K562 (cell line): ENCODE measurements at regions of chr16 and their contacts with region 1.

Region 1: GRCh38 chr16:24062270-24062817 is 193.8 kb upstream of the CACNG3 start:
- DNase-seq: no peak
- ATAC-seq: no peak
- H3K4me3 ChIP-seq: no peak overlapping the region
- H3K27ac ChIP-seq: no peak overlapping the region; the same call in 2 of the 3 replicates
- H3K4me1 ChIP-seq: no peaks in the 10 kb centered on the region; a peak in 3 of 5 replicates
- H3K27me3 ChIP-seq: no peaks in the 10 kb centered on the region
- CTCF ChIP-seq: no peak
- EP300 ChIP-seq: no peak
- POLR2A ChIP-seq: no peak
- RAD21 ChIP-seq: no peak

Region 2: GRCh38 chr16:23842137-23842600 is 220.2 kb before region 1 on chr16:
- CTCF ChIA-PET with region 1: no interaction called
- POLR2A ChIA-PET with region 1: no interaction called
- in situ Hi-C with region 1: no loop called
- intact Hi-C with region 1: no loop called
- DNase-seq: no peak
- ATAC-seq: no peak
- H3K4me3 ChIP-seq: no peak overlapping the region
- H3K27ac ChIP-seq: peak overlapping the region; percentile 21; the same call in 1 of the 3 replicates
- H3K4me1 ChIP-seq: peaks cover 7 to 39% of the 10 kb centered on the region in 2 experiments; a peak in 3 of 5 replicates
- H3K27me3 ChIP-seq: no peaks in the 10 kb centered on the region
- CTCF ChIP-seq: no peak
- EP300 ChIP-seq: no peak
- POLR2A ChIP-seq: no peak
- RAD21 ChIP-seq: no peak

Region 3: GRCh38 chr16:23987443-23987842 is 74.9 kb before region 1 on chr16:
- CTCF ChIA-PET with region 1: no interaction called
- POLR2A ChIA-PET with region 1: no interaction called
- in situ Hi-C with region 1: no loop called
- intact Hi-C with region 1: no loop called
- DNase-seq: no peak
- ATAC-seq: no peak
- H3K4me3 ChIP-seq: no peak overlapping the region
- H3K27ac ChIP-seq: no peak overlapping the region
- H3K4me1 ChIP-seq: no peaks in the 10 kb centered on the region
- H3K27me3 ChIP-seq: no peaks in the 10 kb centered on the region
- CTCF ChIP-seq: no peak
- EP300 ChIP-seq: no peak
- POLR2A ChIP-seq: no peak
- RAD21 ChIP-seq: no peak

Region 4: GRCh38 chr16:24010440-24011089 is 51.8 kb before region 1 on chr16:
- CTCF ChIA-PET with region 1: no interaction called
- POLR2A ChIA-PET with region 1: no interaction called
- in situ Hi-C with region 1: no loop called
- intact Hi-C with region 1: no loop called
- DNase-seq: peak; percentile 71 to 91 (median 76)
- ATAC-seq: peak; percentile 93
- H3K4me3 ChIP-seq: no peak overlapping the region
- H3K27ac ChIP-seq: no peak overlapping the region
- H3K4me1 ChIP-seq: peaks cover 4 to 12% of the 10 kb centered on the region in 2 experiments; a peak in 3 of 5 replicates
- H3K27me3 ChIP-seq: no peaks in the 10 kb centered on the region
- CTCF ChIP-seq: peak; percentile 83 to 85 (median 85)
- EP300 ChIP-seq: no peak
- POLR2A ChIP-seq: no peak
- RAD21 ChIP-seq: peak; percentile 87 to 89

Region 5: GRCh38 chr16:24151482-24151939 is 89.2 kb after region 1 on chr16:
- CTCF ChIA-PET with region 1: no interaction called
- POLR2A ChIA-PET with region 1: no interaction called
- in situ Hi-C with region 1: no loop called
- intact Hi-C with region 1: no loop called
- DNase-seq: no peak
- ATAC-seq: no peak
- H3K4me3 ChIP-seq: no peak overlapping the region
- H3K27ac ChIP-seq: no peak overlapping the region
- H3K4me1 ChIP-seq: no peaks in the 10 kb centered on the region
- H3K27me3 ChIP-seq: no peaks in the 10 kb centered on the region
- CTCF ChIP-seq: no peak
- EP300 ChIP-seq: no peak
- POLR2A ChIP-seq: no peak
- RAD21 ChIP-seq: no peak

Region 6: DNA sequence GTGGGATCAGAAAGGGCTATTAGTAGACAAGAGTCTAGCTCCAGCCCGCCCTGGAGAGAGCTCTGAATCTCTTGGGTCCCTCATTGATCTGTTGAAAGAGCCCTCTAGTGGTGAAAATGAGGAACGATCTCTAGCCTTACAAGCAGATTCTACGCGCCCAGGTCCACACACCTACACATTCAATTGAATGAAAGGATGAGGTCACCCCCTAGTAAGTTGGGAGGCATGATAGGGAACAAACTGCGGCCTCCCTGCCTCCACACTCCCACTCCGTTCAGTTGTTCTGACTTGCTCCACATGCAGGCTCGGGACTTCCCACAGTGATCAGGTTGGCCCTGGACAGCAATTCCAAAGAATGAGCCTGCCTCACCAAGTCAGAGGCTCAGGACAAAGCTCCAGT is 190.8 kb after region 1 on chr16:
- CTCF ChIA-PET with region 1: no interaction called
- POLR2A ChIA-PET with region 1: no interaction called
- in situ Hi-C with region 1: loop called (anchors 5 kb)
- intact Hi-C with region 1: no loop called
- DNase-seq: peak; percentile 63 to 73 (median 67)
- ATAC-seq: peak; percentile 89
- H3K4me3 ChIP-seq: no peak overlapping the region
- H3K27ac ChIP-seq: no peak overlapping the region
- H3K4me1 ChIP-seq: peaks cover 0 to 8% of the 10 kb centered on the region in 2 experiments; a peak in 1 of 5 replicates
- H3K27me3 ChIP-seq: peaks cover 5 to 12% of the 10 kb centered on the region in 2 experiments; a peak in 2 of 5 replicates
- CTCF ChIP-seq: peak; percentile 61 to 75 (median 71)
- EP300 ChIP-seq: no peak
- POLR2A ChIP-seq: no peak
- RAD21 ChIP-seq: peak; percentile 46 to 75